Breast epithelium (tissue), 4 donors: ENCODE measurements at regions of chr5 and their contacts with region 1.

Region 1: DNA sequence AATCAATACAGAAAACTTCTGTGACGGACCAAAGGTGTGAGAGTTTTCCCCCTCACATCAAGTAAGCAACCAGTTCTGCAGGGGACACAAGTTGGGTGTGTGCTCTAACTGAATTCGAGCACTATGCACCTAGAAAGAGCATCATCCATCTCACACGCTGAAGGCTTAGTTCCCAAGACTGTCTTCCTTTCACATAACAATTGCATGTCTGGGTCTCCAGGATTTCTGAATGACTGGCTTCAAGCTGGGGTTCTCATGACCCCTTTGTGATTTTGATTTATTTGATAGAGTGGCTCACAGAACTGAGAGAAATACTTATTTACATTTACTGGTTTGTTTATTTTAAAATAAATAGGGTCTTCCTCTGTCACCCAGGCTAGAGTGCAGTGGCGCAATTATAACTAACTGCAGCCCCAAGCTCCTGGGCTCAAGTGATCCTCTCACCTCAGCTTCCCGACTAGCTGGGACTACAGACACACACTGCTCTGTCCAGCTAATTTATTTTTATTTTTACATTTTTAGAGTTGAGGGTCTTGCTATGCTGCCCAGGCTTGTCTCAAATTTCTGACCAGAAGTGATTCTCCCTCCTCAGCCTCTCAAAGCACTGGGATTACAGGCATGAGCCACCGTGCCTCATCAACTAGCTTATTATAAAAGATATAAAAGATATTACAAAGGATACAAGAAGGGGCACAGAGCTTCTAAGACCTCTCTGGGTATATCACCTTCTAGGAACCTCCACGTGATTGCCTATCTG is 316.7 kb upstream of the CDH12 start:
- DNase-seq: no peak
- H3K4me3 ChIP-seq: no peak overlapping the region
- H3K27ac ChIP-seq: no peak overlapping the region
- H3K4me1 ChIP-seq: no peaks in the 10 kb centered on the region
- H3K27me3 ChIP-seq: no peaks in the 10 kb centered on the region
- CTCF ChIP-seq: no peak
- POLR2A ChIP-seq: no peak

Region 2: DNA sequence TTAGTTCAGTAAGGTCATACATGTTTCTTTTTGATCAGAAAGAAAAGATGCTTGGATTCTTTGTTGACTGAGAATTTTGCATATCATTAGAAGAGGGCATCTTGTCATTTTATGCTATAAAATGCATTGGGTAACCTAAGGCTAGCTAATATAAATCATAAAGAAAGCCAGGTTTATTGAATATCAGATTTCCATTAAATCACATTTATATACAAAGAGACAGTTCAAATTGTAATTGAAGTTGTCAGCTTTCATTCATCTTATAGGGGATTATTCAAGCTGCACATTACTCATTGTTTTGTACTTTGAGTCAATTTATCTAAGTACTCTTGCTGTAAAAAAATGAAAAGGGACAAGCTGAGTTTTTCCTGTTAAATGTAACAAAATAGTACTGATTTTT is 57.6 kb before region 1 on chr5:
- intact Hi-C with region 1: loop called (anchors 2 kb)
- DNase-seq: no peak
- H3K4me3 ChIP-seq: no peak overlapping the region
- H3K27ac ChIP-seq: no peak overlapping the region
- H3K4me1 ChIP-seq: no peaks in the 10 kb centered on the region
- H3K27me3 ChIP-seq: no peaks in the 10 kb centered on the region
- CTCF ChIP-seq: no peak
- POLR2A ChIP-seq: no peak

Region 3: GRCh38 chr5:23208959-23209431 is 39.2 kb after region 1 on chr5:
- intact Hi-C with region 1: no loop called
- DNase-seq: no peak
- H3K4me3 ChIP-seq: no peak overlapping the region
- H3K27ac ChIP-seq: no peak overlapping the region
- H3K4me1 ChIP-seq: no peaks in the 10 kb centered on the region
- H3K27me3 ChIP-seq: no peaks in the 10 kb centered on the region
- CTCF ChIP-seq: peak in 2 of 3 donors; percentile 24 to 31
- POLR2A ChIP-seq: no peak